T-cell (primary cell): ENCODE measurements at regions of chr12 and their contacts with region 1.

Region 1: GRCh38 chr12:53031617-53032016 is 18.2 kb upstream of the TNS2 start:
- DNase-seq: no peak
- ATAC-seq: no peak
- H3K4me3 ChIP-seq: no peak overlapping the region
- H3K4me3 Mint-ChIP-seq: no peak overlapping the region
- H3K27ac ChIP-seq: no peak overlapping the region
- H3K27ac Mint-ChIP-seq: no peak overlapping the region
- H3K4me1 ChIP-seq: no peaks in the 10 kb centered on the region
- H3K4me1 Mint-ChIP-seq: peaks cover 0 to 5% (median 5%) of the 10 kb centered on the region in 3 donors
- H3K27me3 ChIP-seq: no peaks in the 10 kb centered on the region
- H3K27me3 Mint-ChIP-seq: no peaks in the 10 kb centered on the region

Region 2: DNA sequence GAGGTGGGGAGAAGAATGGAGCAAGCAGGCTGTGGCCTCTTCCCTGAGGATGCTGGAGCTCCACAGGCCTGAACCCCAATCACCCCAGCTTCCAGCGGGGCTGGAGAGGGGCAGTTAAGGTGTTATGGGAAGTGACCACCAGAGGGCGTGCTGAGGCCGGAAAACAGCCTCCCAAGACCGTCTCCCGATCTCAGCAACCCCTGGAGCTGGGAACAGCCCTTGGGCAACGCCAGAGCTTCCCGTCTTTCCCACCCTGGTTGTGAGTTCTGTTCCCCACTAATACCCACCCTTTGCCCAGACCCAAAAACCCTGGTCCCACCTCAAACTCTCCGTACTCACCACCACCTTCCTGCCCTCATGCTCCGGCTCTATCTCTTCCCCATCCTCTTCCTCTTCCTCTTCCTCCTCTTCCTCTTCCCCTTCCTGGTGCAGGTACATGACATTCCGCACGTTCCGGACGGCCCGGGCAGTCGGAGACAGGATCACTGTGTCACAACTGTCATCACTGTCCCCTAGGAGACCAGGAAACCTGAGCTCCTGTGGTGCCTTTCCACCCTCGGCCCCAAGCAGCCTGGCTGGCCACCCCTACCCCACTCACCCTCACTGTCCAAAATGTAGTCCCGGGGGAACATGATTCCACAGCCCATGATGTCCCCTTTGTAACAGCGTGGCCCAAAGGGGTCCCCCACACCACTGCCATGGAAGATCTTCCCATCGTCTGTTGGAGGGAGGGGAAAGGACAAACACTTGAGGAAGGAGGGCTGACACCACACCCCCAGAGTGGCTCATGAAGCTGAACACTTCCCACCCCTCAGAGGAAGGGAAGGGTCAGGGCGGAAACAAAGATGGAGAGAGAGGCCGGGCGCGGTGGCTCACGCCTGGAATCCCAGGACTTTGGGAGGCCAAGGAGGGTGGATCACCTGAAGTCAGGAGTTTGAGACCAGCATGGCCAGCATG is 34.6 kb after region 1 on chr12:
- CTCF ChIA-PET with region 1: no interaction called
- POLR2A ChIA-PET with region 1: interaction called in 1 of 2 experiments, 17 read pairs
- DNase-seq: peak in 29 of 35 experiments; percentile 23 to 84 (median 54)
- ATAC-seq: peak; percentile 60 to 79 (median 67)
- H3K4me3 ChIP-seq: no peak overlapping the region
- H3K4me3 Mint-ChIP-seq: no peak overlapping the region
- H3K27ac ChIP-seq: no peak overlapping the region
- H3K27ac Mint-ChIP-seq: peak overlapping the region in 1 of 2 donors; percentile 64
- H3K4me1 ChIP-seq: peaks cover 0 to 5% of the 10 kb centered on the region in 2 experiments
- H3K4me1 Mint-ChIP-seq: peaks cover 10 to 13% (median 12%) of the 10 kb centered on the region in 3 donors
- H3K27me3 ChIP-seq: no peaks in the 10 kb centered on the region
- H3K27me3 Mint-ChIP-seq: no peaks in the 10 kb centered on the region